ENCODE measurements at regions of chr9 and their contacts with region 1.

Region 1: DNA sequence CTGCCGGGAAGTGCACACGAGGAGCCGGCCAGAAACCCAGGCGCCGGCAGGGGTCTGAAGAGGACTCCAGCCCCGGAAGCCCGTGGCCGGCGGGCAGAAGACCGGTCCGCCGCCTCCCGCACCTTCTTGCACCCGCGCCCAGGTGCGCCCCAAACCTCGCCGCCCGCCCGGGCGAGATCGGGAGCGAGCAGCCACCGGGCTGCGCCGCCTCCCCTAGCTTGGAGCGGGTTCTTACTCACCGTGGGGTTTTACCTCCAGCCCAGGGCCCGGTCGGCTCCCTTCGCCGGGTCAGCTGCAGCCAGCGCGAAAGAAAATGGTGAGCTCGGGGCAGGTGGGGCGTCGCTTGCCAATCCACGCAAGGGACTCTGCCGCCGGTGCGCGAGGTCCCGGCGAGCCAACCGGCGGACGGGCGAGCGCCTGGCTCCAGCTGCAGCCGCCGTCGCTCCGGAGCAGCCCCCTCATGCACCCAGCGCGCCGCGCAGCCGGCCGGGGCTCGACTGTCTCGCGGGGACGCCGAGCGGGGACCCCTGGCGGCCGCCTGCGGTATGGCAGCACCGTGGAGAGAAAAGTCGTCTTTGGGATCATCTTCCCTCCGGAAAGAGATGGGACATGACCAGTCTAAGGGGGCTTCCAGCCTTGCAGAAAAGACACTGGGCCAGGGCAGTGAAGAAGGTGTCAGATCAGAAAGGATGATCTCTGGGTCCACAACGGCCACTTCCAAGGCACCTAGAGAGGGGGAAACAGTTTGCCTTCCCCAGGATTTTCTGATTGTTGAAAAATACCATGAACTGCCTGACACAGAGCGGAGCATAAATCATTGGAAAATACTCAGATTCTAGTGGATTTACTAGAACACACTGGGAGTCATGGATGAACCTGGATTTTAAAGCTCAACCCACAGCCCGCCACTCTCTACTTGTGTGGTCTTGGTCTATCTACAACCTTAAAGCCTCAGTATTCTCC is at the start of gene MOB3B:
- DNase-seq: peak; percentile 80 to 98 (median 91)

Region 2: GRCh38 chr9:27333241-27334052 is 196.2 kb before region 1 on chr9:
- intact Hi-C with region 1: loop called (anchors 1 kb)
- DNase-seq: peak in 8 of 10 donors; percentile 37 to 92 (median 65)

Region 3: DNA sequence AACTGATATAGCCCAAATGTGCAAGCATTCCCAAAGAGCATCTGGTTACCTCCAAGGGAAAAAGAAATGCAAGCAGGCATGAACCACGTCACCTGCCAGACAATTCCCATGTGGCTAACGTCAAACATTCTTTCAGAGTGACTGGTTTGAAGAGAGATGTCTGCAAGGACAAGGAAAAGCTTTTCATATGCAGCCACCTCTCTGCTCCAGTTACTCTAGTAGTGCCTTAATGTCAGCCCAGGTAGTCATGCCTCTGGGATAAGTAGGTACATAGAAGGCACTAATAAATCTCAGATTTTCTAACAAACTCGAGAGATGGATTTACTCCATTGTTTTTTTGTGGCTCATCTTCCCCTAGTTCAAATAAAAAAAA is 102.3 kb before region 1 on chr9:
- intact Hi-C with region 1: loop called (anchors 10 kb)
- DNase-seq: no peak

Region 4: DNA sequence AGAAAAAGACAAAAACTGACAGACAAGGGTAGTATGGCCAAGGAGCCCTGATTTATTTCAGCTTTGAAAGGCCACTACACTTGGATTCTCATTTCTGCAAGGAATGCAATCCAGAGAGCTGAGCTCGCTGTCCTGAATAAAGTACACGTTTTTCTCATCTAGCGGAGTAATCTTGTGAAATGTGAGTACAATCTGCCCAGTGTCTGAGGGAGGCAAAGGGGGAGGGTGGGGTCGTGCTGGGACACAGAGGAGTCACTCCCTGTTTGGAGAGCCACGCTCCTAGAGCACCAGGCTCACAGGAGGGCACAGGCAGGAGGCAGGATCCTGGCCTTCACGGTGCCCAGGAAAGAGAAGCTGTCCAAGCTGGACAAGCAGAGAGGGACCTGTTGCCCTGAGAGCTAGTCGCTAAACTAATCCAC is 56.5 kb before region 1 on chr9:
- intact Hi-C with region 1: no loop called
- DNase-seq: peak in 5 of 10 donors; percentile 27 to 84 (median 36)

Region 5: GRCh38 chr9:27622693-27623340 is 93.2 kb after region 1 on chr9:
- intact Hi-C with region 1: no loop called
- DNase-seq: no peak

Region 6: DNA sequence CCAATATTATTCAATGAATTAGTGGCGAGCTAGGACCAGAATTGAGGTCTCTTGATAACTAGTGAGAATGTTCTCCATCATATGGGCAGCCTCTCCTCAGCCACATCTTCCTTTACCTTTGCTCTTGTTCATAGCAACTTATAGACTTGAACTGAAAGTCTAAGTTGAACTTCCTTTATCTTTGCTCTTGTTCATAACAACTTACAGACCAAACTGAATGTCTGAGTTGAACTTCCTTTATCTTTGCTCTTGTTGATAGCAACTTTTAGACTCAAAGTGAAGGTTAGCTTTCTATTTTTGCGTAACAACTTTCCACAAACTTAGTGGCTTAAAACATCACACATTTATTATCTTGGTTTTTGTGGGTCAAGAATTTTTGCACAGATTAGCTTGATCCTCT is 190.1 kb after region 1 on chr9:
- intact Hi-C with region 1: no loop called
- DNase-seq: no peak

Measured in posterior cingulate gyrus (tissue), 11 donors.